ENCODE measurements at regions of chr17 and their contacts with region 1.

Region 1: GRCh38 chr17:43367737-43368242 is 31.0 kb upstream of the ARL4D start:
- H3K4me3 ChIP-seq: no peak overlapping the region
- H3K27ac ChIP-seq: peak overlapping the region; percentile 99
- H3K4me1 ChIP-seq: peaks cover 20% of the 10 kb centered on the region; the same call in 1 of the 2 replicates
- CTCF ChIP-seq: no peak

Region 2: DNA sequence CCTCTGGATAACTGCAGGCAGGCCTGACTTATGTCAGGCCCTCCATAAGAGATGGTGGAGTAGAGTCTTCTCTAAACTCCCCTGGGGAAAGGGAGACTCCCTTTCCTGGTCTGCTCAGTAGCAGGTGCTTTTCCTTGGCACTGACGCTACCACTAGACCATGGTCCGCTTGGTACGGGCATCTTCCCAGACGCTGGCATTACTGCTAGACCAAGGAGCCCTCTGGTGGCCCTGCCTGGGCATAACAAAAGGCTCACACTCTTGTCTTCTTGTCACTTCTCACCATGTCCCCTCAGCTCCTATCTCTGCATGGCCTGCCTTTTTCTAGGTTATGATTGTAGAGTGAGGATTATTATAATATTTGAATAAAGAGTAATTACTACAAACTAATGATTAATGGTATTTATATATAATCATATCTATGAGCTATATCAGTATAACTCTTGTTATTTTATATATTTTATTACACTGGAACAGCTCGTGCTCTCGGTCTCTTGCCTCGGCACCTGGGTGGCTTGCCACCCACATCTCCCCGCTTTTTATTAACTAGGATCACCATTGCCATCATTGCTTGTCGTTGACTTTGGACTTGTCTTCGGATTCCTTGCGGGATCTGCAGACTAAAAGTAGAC is 28.8 kb before region 1 on chr17:
- CTCF ChIA-PET with region 1: interaction called, 12 read pairs
- POLR2A ChIA-PET with region 1: interaction called, 15 read pairs
- H3K4me3 ChIP-seq: no peak overlapping the region
- H3K27ac ChIP-seq: no peak overlapping the region
- H3K4me1 ChIP-seq: 0 out of 2 replicates have a peak, but pooled peaks cover 3% of the 10 kb centered on the region
- CTCF ChIP-seq: peak; percentile 58

Region 3: GRCh38 chr17:43351691-43352090 is 16.1 kb before region 1 on chr17:
- CTCF ChIA-PET with region 1: interaction called, 4 read pairs
- POLR2A ChIA-PET with region 1: interaction called, 83 read pairs
- H3K4me3 ChIP-seq: no peak overlapping the region
- H3K27ac ChIP-seq: no peak overlapping the region
- H3K4me1 ChIP-seq: no peaks in the 10 kb centered on the region
- CTCF ChIP-seq: no peak

Region 4: DNA sequence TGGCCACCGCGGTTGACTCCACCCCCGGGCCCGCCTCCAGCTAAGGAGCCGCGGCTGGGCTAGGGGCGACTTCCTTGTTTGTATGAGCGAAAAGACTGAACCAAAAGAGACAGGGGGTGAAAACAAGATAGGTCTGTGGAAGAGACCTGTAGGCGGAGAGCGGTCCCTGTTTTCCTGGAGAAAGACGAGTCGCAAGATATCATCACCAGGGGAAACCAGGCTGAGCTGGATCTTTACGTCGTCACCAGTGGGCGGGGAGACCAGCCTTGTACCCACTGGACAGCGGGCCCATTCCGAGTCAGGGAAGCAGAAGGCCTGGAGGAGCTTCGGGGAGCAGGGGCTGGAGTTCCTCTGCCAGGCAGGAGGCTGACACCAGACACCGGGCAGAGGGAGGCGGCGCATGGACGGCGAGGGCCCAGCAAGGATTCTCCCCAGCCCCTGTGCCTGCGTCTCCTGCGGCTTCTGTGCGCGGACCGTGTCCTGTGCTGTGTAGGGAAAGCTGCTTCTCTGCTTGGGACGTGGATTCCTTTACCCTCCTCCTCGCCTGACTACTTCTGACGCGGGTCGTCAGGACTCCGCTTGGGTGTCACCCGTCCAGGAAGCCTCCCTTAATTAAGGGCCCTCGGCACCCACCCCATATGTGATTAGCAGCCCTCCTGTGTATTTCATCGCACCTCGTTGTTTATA is 20.7 kb after region 1 on chr17:
- CTCF ChIA-PET with region 1: interaction called, 29 read pairs
- POLR2A ChIA-PET with region 1: interaction called, 130 read pairs
- H3K4me3 ChIP-seq: peak overlapping the region; percentile 61
- H3K27ac ChIP-seq: peak overlapping the region; percentile 86
- H3K4me1 ChIP-seq: no peaks in the 10 kb centered on the region
- CTCF ChIP-seq: no peak

Region 5: GRCh38 chr17:43418441-43419374 is 50.9 kb after region 1 on chr17:
- CTCF ChIA-PET with region 1: no interaction called
- POLR2A ChIA-PET with region 1: interaction called, 11 read pairs
- H3K4me3 ChIP-seq: no peak overlapping the region
- H3K27ac ChIP-seq: no peak overlapping the region
- H3K4me1 ChIP-seq: no peaks in the 10 kb centered on the region
- CTCF ChIP-seq: no peak

Region 6: DNA sequence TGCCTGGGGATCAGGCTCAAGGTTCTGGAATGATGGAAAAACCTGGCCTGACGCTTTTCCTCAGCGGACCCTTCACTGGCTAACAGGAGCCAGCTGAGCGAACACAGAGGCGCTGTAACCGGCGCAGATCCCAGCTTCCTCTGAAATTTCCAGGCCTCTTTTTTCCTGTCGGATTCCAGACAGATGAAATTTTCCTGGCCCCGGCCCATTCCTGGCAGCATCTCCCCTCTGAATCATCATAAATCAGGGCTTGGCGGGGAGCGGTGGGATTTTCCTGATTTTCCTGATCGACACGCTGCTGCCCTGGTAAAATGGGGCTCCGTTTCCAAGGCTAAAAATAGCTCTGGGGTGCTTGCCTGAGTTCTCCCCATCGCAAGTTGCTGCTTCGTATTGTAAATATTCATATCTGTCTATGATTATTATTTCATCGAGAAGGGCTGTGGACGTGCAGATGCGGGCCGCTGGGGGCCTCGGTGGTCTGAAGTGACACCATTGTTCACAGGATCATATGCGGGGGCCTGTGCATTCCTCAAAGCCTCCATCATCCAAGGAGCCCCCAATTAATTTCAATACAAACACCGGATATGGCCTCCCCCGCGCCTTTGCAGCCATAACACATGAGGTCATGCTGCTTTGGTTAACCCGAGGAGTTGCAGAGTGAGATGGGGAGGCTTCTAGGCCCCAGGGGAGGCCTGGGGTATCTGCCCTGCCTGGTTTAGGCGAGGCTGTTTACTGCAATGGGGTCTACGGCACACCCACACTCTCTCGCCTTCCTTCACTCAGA is 224.2 kb after region 1 on chr17:
- CTCF ChIA-PET with region 1: no interaction called
- POLR2A ChIA-PET with region 1: no interaction called
- H3K4me3 ChIP-seq: no peak overlapping the region
- H3K27ac ChIP-seq: peak overlapping the region; percentile 22; the same call in 1 of the 2 replicates
- H3K4me1 ChIP-seq: peaks cover 10% of the 10 kb centered on the region
- CTCF ChIP-seq: no peak